ENCODE measurements at regions of chr3 and their contacts with region 1.

Region 1: DNA sequence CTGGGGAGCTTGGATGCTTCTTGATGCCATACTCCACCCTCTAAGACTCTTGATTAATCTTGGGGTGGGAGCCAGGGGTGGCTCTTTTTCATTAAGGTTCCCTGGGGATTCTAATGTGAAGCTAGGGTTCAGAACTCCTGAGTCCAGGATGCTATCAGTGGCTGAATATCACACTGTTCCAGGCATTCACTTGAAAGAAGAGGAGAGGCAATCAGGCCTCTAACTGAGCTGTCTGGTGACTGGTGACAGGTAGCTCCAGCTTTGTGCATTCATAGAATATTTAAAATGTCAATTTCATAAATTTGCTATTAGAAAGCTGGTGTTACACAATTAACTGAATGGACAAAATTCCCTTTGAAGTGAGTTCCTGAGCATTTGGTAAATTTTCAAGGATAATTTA is 139.0 kb downstream of the CHDH start:
- DNase-seq: no peak
- H3K4me3 Mint-ChIP-seq: no peak overlapping the region
- H3K27ac Mint-ChIP-seq: no peak overlapping the region
- H3K4me1 Mint-ChIP-seq: peaks cover 16% of the 10 kb centered on the region
- H3K27me3 Mint-ChIP-seq: no peaks in the 10 kb centered on the region

Region 2: GRCh38 chr3:52934630-52935530 is 772.3 kb before region 1 on chr3:
- CTCF ChIA-PET with region 1: no interaction called
- POLR2A ChIA-PET with region 1: interaction called, 11 read pairs
- DNase-seq: peak; percentile 67
- H3K4me3 Mint-ChIP-seq: no peak overlapping the region
- H3K27ac Mint-ChIP-seq: no peak overlapping the region
- H3K4me1 Mint-ChIP-seq: peaks cover 12% of the 10 kb centered on the region
- H3K27me3 Mint-ChIP-seq: no peaks in the 10 kb centered on the region

Region 3: DNA sequence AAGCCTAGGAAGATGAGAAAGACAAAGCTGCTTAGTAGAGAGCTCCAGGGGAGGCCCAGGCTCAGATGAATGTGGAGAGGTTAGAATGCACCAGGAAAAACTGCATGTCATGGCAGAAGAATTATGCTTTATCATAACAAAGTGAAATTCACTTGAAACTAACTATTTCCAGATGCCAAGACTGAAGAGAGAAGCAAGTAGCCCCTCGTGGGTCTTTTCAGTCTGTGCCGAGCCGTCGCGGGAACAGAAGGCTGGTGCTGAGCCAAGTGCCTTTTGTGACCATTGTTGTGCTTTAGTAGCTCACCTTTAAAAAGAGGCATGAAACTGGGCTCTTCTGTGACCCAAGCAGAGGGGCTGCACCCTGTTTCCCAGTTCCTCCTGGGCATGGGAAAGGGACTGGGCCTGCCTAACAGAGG is 65.8 kb after region 1 on chr3:
- CTCF ChIA-PET with region 1: no interaction called
- POLR2A ChIA-PET with region 1: no interaction called
- DNase-seq: no peak
- H3K4me3 Mint-ChIP-seq: no peak overlapping the region
- H3K27ac Mint-ChIP-seq: no peak overlapping the region
- H3K4me1 Mint-ChIP-seq: peaks cover 3% of the 10 kb centered on the region
- H3K27me3 Mint-ChIP-seq: peaks cover 25% of the 10 kb centered on the region